ENCODE measurements at regions of chr16 and their contacts with region 1.

Region 1: DNA sequence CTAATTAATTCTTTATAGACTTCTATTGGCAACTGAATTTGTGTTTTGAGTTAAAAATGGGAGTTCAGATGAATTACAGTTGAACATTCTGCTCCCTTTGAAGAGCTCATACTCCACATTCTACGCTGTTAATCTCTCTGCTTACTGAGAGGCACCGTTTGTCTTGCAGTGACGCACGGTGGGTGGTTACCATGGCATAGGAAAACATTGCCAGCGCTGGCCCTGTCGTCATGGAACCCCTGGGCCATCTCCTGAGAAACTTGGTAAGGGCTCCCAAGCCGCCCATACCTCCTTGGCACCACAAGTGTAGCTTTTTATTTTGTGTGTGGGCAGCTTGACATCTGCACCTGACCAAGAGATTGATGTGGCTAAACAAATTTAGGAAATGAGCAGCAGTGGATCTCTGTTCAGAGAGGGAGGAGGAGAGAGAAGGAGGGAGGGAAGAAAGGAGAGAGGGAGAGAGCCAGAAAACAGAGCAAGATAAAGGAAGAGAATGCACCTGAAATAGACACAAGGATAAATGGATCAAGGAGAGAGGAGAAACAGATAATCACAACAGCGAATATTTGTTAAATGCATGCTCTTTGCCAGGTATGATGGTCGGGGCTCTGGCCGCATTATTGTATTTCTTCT is 398.5 kb downstream of the HAPSTR1 start:
- DNase-seq: peak; percentile 93
- H3K4me3 ChIP-seq: no peak overlapping the region
- H3K27ac ChIP-seq: peak overlapping the region; percentile 43 to 83 (median 72)
- H3K4me1 ChIP-seq: peaks cover 0 to 14% (median 3%) of the 10 kb centered on the region in 4 donors
- H3K27me3 ChIP-seq: no peaks in the 10 kb centered on the region
- CTCF ChIP-seq: no peak
- EP300 ChIP-seq: peak; percentile 8 to 93 (median 64)
- POLR2A ChIP-seq: no peak

Region 2: GRCh38 chr16:9365376-9365728 is 124.6 kb before region 1 on chr16:
- intact Hi-C with region 1: loop called (anchors 5 kb)
- DNase-seq: peak; percentile 97
- H3K4me3 ChIP-seq: no peak overlapping the region
- H3K27ac ChIP-seq: peak overlapping the region; percentile 59 to 72 (median 66)
- H3K4me1 ChIP-seq: peaks cover 0 to 10% (median 7%) of the 10 kb centered on the region in 4 donors
- H3K27me3 ChIP-seq: no peaks in the 10 kb centered on the region
- CTCF ChIP-seq: no peak
- EP300 ChIP-seq: peak in 3 of 4 donors; percentile 83 to 86 (median 85)
- POLR2A ChIP-seq: no peak

Region 3: GRCh38 chr16:9518051-9518450 is 28.1 kb after region 1 on chr16:
- intact Hi-C with region 1: loop called (anchors 2 kb)
- DNase-seq: peak; percentile 82
- H3K4me3 ChIP-seq: no peak overlapping the region
- H3K27ac ChIP-seq: peak overlapping the region in 3 of 4 donors; percentile 37 to 48 (median 48)
- H3K4me1 ChIP-seq: peaks cover 2 to 22% (median 19%) of the 10 kb centered on the region in 4 donors
- H3K27me3 ChIP-seq: no peaks in the 10 kb centered on the region
- CTCF ChIP-seq: no peak
- EP300 ChIP-seq: peak; percentile 7 to 65 (median 37)
- POLR2A ChIP-seq: no peak

Region 4: DNA sequence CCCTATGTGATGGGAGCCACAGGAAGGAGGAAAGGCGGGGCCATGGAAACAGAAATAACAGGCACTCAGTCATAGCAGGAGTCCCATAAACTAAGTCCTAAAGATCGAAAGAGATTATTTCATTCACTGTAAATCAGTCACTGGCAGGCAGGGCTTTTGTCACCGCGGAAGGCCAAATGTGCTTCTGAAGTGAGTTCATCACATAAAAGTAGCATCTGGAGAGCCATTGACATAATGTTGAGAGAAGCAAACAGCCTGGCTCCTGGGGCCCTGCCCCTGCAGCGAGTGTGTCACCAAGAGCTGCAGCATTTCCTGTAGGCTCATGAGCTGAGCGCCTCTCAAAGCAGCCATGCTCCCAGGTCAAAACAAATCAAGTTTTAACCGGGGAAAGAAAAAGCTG is 77.7 kb after region 1 on chr16:
- intact Hi-C with region 1: no loop called
- DNase-seq: no peak
- H3K4me3 ChIP-seq: no peak overlapping the region
- H3K27ac ChIP-seq: no peak overlapping the region
- H3K4me1 ChIP-seq: no peaks in the 10 kb centered on the region
- H3K27me3 ChIP-seq: no peaks in the 10 kb centered on the region
- CTCF ChIP-seq: no peak
- EP300 ChIP-seq: no peak
- POLR2A ChIP-seq: no peak